ENCODE measurements at regions of chr2 and their contacts with region 1.

Region 1: GRCh38 chr2:190970873-190971506 is 43.0 kb downstream of the STAT1 start:
- DNase-seq: peak; percentile 92
- H3K4me3 ChIP-seq: no peak overlapping the region
- H3K27ac ChIP-seq: peak overlapping the region; percentile 97
- H3K4me1 ChIP-seq: peaks cover 56% of the 10 kb centered on the region
- H3K27me3 ChIP-seq: no peaks in the 10 kb centered on the region
- CTCF ChIP-seq: no peak
- POLR2A ChIP-seq: peak; percentile 68

Region 2: DNA sequence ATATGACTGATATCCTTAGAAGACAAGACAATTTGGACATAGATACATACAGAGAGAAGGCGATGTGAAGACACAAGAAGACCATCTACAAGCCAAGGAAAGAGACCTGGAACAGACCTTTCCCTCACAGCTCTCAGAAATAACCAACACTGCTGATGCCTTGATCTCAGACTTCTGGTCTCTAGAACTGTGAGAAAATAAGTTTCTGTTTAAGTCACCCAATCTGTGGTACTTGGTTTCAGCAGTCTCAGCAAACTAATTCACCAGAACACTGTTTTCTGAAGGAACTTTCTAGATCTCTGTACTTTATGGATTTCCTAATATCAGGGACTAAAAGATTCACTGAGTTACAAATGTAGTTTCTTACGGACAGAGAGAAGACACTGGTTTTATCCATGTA is 263.3 kb before region 1 on chr2:
- CTCF ChIA-PET with region 1: no interaction called
- POLR2A ChIA-PET with region 1: no interaction called
- dilution Hi-C with region 1: no loop called
- intact Hi-C with region 1: no loop called
- DNase-seq: no peak
- H3K4me3 ChIP-seq: no peak overlapping the region
- H3K27ac ChIP-seq: no peak overlapping the region
- H3K4me1 ChIP-seq: no peaks in the 10 kb centered on the region
- H3K27me3 ChIP-seq: no peaks in the 10 kb centered on the region
- CTCF ChIP-seq: no peak
- POLR2A ChIP-seq: no peak

Region 3: GRCh38 chr2:190863946-190864345 is 107.0 kb before region 1 on chr2:
- CTCF ChIA-PET with region 1: no interaction called
- POLR2A ChIA-PET with region 1: no interaction called
- dilution Hi-C with region 1: no loop called
- intact Hi-C with region 1: no loop called
- DNase-seq: no peak
- H3K4me3 ChIP-seq: no peak overlapping the region
- H3K27ac ChIP-seq: no peak overlapping the region
- H3K4me1 ChIP-seq: peaks cover 11% of the 10 kb centered on the region
- H3K27me3 ChIP-seq: peaks cover 0 to 3% of the 10 kb centered on the region in 2 experiments
- CTCF ChIP-seq: no peak
- POLR2A ChIP-seq: no peak

Region 4: DNA sequence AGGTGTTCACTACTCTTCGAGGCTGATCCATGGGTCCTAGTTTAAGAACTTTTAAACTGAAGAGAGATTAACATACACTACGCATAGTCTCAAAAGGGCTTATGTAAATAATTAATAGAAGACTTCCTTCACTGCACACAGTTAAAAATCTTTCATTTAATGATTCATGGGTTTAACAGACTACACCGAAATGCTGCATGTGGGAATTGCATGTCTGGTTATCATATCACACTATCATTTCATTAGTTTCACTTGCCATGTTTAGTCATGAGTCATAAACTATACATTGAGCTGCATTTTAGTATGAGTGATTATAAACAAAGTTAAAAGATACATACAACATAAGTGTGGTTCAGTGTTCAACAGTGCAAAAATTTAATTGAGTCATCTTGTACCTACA is 59.2 kb before region 1 on chr2:
- CTCF ChIA-PET with region 1: no interaction called
- POLR2A ChIA-PET with region 1: no interaction called
- dilution Hi-C with region 1: no loop called
- intact Hi-C with region 1: no loop called
- DNase-seq: no peak
- H3K4me3 ChIP-seq: no peak overlapping the region
- H3K27ac ChIP-seq: no peak overlapping the region
- H3K4me1 ChIP-seq: peaks cover 5% of the 10 kb centered on the region
- H3K27me3 ChIP-seq: no peaks in the 10 kb centered on the region
- CTCF ChIP-seq: no peak
- POLR2A ChIP-seq: no peak

Region 5: GRCh38 chr2:190947711-190948251 is 23.2 kb before region 1 on chr2:
- CTCF ChIA-PET with region 1: interaction called, 12 read pairs
- POLR2A ChIA-PET with region 1: no interaction called
- dilution Hi-C with region 1: no loop called
- intact Hi-C with region 1: no loop called
- DNase-seq: peak; percentile 93
- H3K4me3 ChIP-seq: peak overlapping the region in 1 of 3 experiments; percentile 33
- H3K27ac ChIP-seq: peak overlapping the region; percentile 78
- H3K4me1 ChIP-seq: peaks cover 31% of the 10 kb centered on the region
- H3K27me3 ChIP-seq: no peaks in the 10 kb centered on the region
- CTCF ChIP-seq: no peak
- POLR2A ChIP-seq: peak; percentile 29

Region 6: GRCh38 chr2:191078165-191078867 is 107.3 kb after region 1 on chr2:
- CTCF ChIA-PET with region 1: no interaction called
- POLR2A ChIA-PET with region 1: no interaction called
- dilution Hi-C with region 1: no loop called
- intact Hi-C with region 1: no loop called
- DNase-seq: no peak
- H3K4me3 ChIP-seq: no peak overlapping the region
- H3K27ac ChIP-seq: no peak overlapping the region
- H3K4me1 ChIP-seq: no peaks in the 10 kb centered on the region
- H3K27me3 ChIP-seq: no peaks in the 10 kb centered on the region
- CTCF ChIP-seq: no peak
- POLR2A ChIP-seq: no peak

Measured in endothelial cell of umbilical vein (primary cell).